Naive thymus-derived CD4-positive, alpha-beta T cell (primary cell): ENCODE measurements at regions of chr1 and their contacts with region 1.

Region 1: GRCh38 chr1:243255791-243256512 is at the start of gene SDCCAG8:
- DNase-seq: peak; percentile 75 to 97 (median 94)
- ATAC-seq: peak; percentile 85
- H3K4me3 ChIP-seq: peak within 1 kb of the TSS; percentile 94
- H3K4me3 Mint-ChIP-seq: peak within 1 kb of the TSS; percentile 97 to 100 (median 100)
- H3K27ac ChIP-seq: peak within 1 kb of the TSS; percentile 96
- H3K27ac Mint-ChIP-seq: peak within 1 kb of the TSS; percentile 99 to 100 (median 100)
- H3K4me1 ChIP-seq: peaks cover 13 to 22% of the 10 kb centered on the region in 2 donors
- H3K4me1 Mint-ChIP-seq: peaks cover 19 to 66% (median 51%) of the 10 kb centered on the region in 7 donors
- H3K27me3 ChIP-seq: no peaks in the 10 kb centered on the region
- H3K27me3 Mint-ChIP-seq: peaks cover 0 to 3% (median 0%) of the 10 kb centered on the region in 5 donors
- total RNA-seq, gene SDCCAG8: 26.0 to 45.2 (median 41.4) TPM

Region 2: DNA sequence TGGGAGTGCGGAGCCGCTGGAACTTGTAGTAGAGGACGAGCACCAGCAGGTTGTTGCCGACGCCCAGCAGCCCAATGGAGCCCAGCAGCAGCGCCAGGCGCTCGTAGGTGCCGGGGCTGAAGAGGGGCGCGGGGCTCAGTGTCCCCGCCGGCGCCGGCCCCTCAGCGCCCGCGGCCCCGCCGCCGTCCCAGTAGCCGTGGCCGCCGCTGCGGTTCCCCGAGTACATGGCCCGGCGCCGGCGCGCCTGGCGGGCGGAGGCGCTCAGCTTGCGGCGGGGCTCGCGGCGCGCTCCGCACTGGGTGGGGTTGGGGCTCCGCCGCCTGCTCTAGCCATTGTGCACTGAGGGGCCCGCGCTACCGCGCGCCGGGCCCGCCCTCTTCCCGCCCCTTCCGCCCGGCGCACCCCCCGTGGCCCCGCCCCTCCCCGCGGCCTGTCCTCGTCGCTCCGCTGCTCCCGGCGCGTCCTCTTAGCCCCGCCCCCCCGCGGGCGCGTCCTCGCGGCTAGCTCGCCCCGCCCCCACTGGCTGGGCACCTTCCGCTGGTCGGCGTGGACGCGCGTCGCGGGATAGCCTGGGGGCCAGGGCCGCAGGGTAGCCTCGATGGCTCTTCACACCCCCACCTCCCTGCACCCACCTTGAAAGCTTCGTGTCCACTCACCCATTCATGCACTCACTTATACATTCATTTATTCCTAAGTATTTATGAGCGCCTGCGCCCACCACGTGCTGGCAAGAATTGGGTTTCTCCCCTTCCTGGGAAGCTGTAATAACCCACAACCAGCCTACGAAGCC is 1615.7 kb before region 1 on chr1 and contains the starts of genes CHML and OPN3:
- CTCF ChIA-PET with region 1: no interaction called
- POLR2A ChIA-PET with region 1: interaction called, 3 read pairs
- intact Hi-C with region 1: loop called (anchors 1 to 10 kb)
- DNase-seq: peak; percentile 79 to 98 (median 85)
- ATAC-seq: peak; percentile 97
- H3K4me3 ChIP-seq: peak within 1 kb of the TSS; percentile 84
- H3K4me3 Mint-ChIP-seq: peak within 1 kb of the TSS; percentile 79 to 92 (median 90)
- H3K27ac ChIP-seq: peak within 1 kb of the TSS; percentile 82
- H3K27ac Mint-ChIP-seq: peak within 1 kb of the TSS; percentile 83 to 97 (median 91)
- H3K4me1 ChIP-seq: peaks cover 0 to 20% of the 10 kb centered on the region in 2 donors
- H3K4me1 Mint-ChIP-seq: peaks cover 25 to 47% (median 45%) of the 10 kb centered on the region in 7 donors
- H3K27me3 ChIP-seq: no peaks in the 10 kb centered on the region
- H3K27me3 Mint-ChIP-seq: no peaks in the 10 kb centered on the region
- total RNA-seq, gene CHML: 11.4 to 18.3 (median 14.0) TPM
- total RNA-seq, gene OPN3: 3.6 to 11.5 (median 10.4) TPM

Region 3: DNA sequence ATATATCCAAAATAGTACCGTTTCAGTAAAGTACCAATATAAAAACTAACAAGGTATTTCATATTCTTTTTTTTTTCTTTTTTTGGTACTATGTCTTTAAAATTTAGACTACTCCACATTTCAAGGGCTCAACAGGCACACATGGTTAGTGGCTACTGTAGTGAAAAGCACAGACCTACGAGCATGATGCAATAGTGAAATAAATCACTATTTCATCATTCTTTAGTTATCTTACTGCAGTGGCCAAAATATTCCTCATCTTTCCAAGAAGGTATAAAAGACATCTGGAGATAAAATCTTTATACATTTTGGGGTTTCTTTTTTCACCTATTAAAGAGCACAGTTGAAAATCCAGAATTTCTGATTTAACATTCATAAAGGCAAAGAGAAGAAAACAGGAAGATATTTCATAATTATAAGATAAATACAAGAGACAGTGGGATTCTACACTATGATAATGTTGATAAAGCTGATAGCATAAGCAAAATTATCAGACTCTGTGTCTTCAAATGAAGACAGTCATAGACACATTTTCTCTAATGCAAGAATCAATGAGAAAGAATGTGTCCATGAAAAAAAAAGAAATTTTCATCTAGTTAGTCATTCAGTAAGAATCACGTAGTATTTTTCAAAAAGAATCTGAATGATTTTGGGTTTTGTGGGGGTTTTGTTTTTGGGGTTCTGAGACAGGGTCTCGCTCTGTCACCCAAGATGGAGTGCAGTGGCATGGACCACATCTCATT is 42.7 kb before region 1 on chr1:
- CTCF ChIA-PET with region 1: no interaction called
- POLR2A ChIA-PET with region 1: no interaction called
- intact Hi-C with region 1: loop called in 1 of 2 experiments (anchors 2 kb)
- DNase-seq: no peak
- ATAC-seq: no peak
- H3K4me3 ChIP-seq: no peak overlapping the region
- H3K4me3 Mint-ChIP-seq: no peak overlapping the region
- H3K27ac ChIP-seq: no peak overlapping the region
- H3K27ac Mint-ChIP-seq: peak overlapping the region in 1 of 9 donors; percentile 31
- H3K4me1 ChIP-seq: no peaks in the 10 kb centered on the region
- H3K4me1 Mint-ChIP-seq: peaks cover 0 to 11% (median 0%) of the 10 kb centered on the region in 7 donors
- H3K27me3 ChIP-seq: no peaks in the 10 kb centered on the region
- H3K27me3 Mint-ChIP-seq: no peaks in the 10 kb centered on the region

Region 4: DNA sequence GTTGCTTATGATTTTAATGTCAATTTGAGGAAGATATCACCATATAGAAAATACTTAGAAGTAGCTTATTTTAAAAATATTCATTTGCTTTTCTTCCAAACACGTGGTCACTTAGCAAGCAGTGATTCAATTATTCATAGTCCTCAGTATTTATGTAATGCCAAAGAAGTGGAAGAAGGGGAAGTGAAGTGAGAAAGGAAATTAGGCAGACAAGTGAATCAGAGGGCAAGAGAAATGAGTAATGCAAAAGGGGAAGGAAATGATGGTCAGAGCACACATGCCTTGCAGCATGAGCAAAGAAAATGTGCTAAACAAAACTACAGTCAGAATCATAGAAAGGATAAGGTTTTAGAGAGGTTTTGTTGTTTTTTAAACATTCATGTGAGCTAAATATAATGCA is 31.7 kb after region 1 on chr1:
- CTCF ChIA-PET with region 1: no interaction called
- POLR2A ChIA-PET with region 1: interaction called, 5 read pairs
- intact Hi-C with region 1: loop called (anchors 2 kb)
- DNase-seq: no peak
- ATAC-seq: peak; percentile 73
- H3K4me3 ChIP-seq: no peak overlapping the region
- H3K4me3 Mint-ChIP-seq: peak overlapping the region in 5 of 10 donors; percentile 9 to 55 (median 32)
- H3K27ac ChIP-seq: no peak overlapping the region
- H3K27ac Mint-ChIP-seq: peak overlapping the region in 8 of 9 donors; percentile 2 to 74 (median 36)
- H3K4me1 ChIP-seq: peaks cover 0 to 5% of the 10 kb centered on the region in 2 donors
- H3K4me1 Mint-ChIP-seq: peaks cover 10 to 48% (median 40%) of the 10 kb centered on the region in 7 donors
- H3K27me3 ChIP-seq: no peaks in the 10 kb centered on the region
- H3K27me3 Mint-ChIP-seq: no peaks in the 10 kb centered on the region

Region 5: GRCh38 chr1:243428617-243429342 is 172.8 kb after region 1 on chr1:
- CTCF ChIA-PET with region 1: no interaction called
- POLR2A ChIA-PET with region 1: no interaction called
- intact Hi-C with region 1: no loop called
- DNase-seq: no peak
- ATAC-seq: no peak
- H3K4me3 ChIP-seq: no peak overlapping the region
- H3K4me3 Mint-ChIP-seq: no peak overlapping the region
- H3K27ac ChIP-seq: no peak overlapping the region
- H3K27ac Mint-ChIP-seq: no peak overlapping the region
- H3K4me1 ChIP-seq: no peaks in the 10 kb centered on the region
- H3K4me1 Mint-ChIP-seq: peaks cover 0 to 5% (median 0%) of the 10 kb centered on the region in 7 donors
- H3K27me3 ChIP-seq: no peaks in the 10 kb centered on the region
- H3K27me3 Mint-ChIP-seq: no peaks in the 10 kb centered on the region

Region 6: DNA sequence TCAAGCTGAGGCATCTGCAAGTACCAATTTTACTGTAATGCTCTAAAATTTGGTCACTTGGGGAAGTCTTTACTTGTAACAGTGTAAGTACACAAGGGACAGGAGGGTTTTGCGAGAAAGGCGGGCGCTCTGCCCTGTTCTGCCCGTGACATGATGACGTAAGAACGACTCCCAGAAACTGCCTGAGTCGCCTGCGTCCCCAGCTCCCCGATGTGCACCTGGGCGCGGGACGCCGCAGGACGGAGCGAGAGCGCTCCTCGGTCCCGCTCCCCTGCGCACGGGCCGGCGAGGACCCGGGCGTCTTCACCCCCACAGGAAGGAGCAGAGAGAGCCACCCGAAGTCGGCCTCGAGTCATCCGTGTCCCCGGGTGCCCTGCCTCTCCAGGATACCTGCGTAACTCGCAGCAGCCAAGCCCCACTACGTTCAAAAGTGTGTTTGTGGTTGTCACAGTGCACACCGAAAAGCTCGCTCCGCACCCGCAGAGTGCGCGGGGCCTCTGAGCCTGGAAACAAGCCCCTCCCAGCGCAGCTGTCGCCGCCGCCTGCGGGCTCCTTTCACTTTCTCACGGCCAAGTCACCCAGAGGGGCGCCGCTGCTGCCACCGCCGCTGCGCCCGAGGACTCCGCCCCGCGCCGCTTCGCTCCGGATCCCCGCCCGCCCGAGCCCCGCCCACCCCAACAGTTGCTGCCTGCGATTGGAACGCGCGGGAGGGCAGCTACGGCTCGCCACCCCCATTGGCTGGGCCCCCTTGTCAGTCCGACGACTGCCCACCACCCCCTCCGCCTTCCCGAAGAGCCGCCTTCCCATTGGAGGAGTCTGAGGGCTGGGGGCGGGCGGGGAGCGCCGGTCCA is 791.9 kb after region 1 on chr1:
- CTCF ChIA-PET with region 1: no interaction called
- POLR2A ChIA-PET with region 1: interaction called, 4 read pairs
- intact Hi-C with region 1: loop called (anchors 1 kb)
- DNase-seq: peak; percentile 85 to 98 (median 97)
- ATAC-seq: peak; percentile 87
- H3K4me3 ChIP-seq: peak overlapping the region; percentile 61
- H3K4me3 Mint-ChIP-seq: peak overlapping the region; percentile 86 to 96 (median 96)
- H3K27ac ChIP-seq: peak overlapping the region; percentile 96
- H3K27ac Mint-ChIP-seq: peak overlapping the region; percentile 97 to 100 (median 98)
- H3K4me1 ChIP-seq: peaks cover 6 to 23% of the 10 kb centered on the region in 2 donors
- H3K4me1 Mint-ChIP-seq: peaks cover 13 to 39% (median 33%) of the 10 kb centered on the region in 7 donors
- H3K27me3 ChIP-seq: no peaks in the 10 kb centered on the region
- H3K27me3 Mint-ChIP-seq: peaks cover 0 to 43% (median 0%) of the 10 kb centered on the region in 5 donors

Region 7: DNA sequence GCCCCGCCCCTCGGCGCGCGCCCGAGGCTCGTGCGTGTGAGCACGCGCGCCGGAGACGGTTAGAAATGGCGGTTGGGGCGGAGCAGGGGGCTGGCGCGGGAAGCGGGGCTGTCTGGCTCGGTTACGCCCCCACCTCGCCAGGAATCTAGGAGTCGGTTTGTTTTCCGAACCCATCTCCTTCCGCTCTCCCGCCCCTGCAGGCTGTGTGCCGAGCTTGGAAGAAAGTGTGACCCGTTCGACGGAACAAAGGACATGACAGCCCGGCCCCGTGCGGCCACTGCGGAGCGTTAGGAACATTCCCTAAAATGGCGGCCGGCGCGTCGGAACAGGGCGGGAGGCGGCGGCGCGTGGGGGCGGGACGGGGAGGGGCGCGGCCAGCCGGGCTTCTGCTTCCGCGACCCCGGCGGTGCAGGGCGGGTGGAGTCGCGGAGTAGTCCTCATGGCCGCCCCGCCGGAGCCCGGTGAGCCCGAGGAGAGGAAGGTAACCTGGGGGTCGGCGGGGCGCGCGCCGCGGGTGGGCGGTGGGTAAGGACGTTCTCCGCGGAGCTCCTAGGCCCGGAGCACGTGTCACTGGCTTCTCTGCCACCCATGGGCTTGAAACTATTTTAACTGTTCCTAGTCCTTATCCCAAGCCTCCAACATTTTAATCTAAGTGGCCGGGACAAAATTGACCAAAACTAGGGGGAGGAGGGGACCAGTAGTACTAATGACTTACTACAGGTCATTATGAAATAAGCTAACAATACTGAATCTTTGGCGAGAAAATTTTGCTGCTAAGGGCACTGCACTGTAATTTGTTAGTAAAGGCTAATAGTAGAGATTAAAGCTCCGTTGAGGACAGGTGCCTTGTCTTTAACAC is 1579.6 kb after region 1 on chr1 and contains the start of gene COX20:
- CTCF ChIA-PET with region 1: no interaction called
- POLR2A ChIA-PET with region 1: interaction called, 4 read pairs
- intact Hi-C with region 1: loop called (anchors 1 to 10 kb)
- DNase-seq: peak; percentile 84 to 97 (median 93)
- ATAC-seq: peak; percentile 84
- H3K4me3 ChIP-seq: peak within 1 kb of the TSS; percentile 87
- H3K4me3 Mint-ChIP-seq: peak within 1 kb of the TSS; percentile 85 to 100 (median 97)
- H3K27ac ChIP-seq: peak within 1 kb of the TSS; percentile 96
- H3K27ac Mint-ChIP-seq: peak within 1 kb of the TSS; percentile 99 to 100 (median 100)
- H3K4me1 ChIP-seq: peaks cover 17 to 27% of the 10 kb centered on the region in 2 donors
- H3K4me1 Mint-ChIP-seq: peaks cover 34 to 55% (median 48%) of the 10 kb centered on the region in 7 donors
- H3K27me3 ChIP-seq: no peaks in the 10 kb centered on the region
- H3K27me3 Mint-ChIP-seq: no peaks in the 10 kb centered on the region
- total RNA-seq, gene COX20: 23.5 to 31.0 (median 27.8) TPM